Natural killer cell (primary cell): ENCODE measurements at regions of chr10 and their contacts with region 1.

Region 1: GRCh38 chr10:109889867-109890266 is 33.4 kb downstream of the XPNPEP1 start:
- DNase-seq: no peak
- ATAC-seq: no peak
- H3K4me3 ChIP-seq: no peak overlapping the region
- H3K4me3 Mint-ChIP-seq: no peak overlapping the region
- H3K27ac ChIP-seq: no peak overlapping the region
- H3K27ac Mint-ChIP-seq: peak overlapping the region in 1 of 2 donors; percentile 18
- H3K4me1 ChIP-seq: peaks cover 19% of the 10 kb centered on the region
- H3K4me1 Mint-ChIP-seq: peaks cover 37 to 51% of the 10 kb centered on the region in 2 donors
- H3K27me3 ChIP-seq: no peaks in the 10 kb centered on the region
- H3K27me3 Mint-ChIP-seq: no peaks in the 10 kb centered on the region
- CTCF ChIP-seq: no peak

Region 2: DNA sequence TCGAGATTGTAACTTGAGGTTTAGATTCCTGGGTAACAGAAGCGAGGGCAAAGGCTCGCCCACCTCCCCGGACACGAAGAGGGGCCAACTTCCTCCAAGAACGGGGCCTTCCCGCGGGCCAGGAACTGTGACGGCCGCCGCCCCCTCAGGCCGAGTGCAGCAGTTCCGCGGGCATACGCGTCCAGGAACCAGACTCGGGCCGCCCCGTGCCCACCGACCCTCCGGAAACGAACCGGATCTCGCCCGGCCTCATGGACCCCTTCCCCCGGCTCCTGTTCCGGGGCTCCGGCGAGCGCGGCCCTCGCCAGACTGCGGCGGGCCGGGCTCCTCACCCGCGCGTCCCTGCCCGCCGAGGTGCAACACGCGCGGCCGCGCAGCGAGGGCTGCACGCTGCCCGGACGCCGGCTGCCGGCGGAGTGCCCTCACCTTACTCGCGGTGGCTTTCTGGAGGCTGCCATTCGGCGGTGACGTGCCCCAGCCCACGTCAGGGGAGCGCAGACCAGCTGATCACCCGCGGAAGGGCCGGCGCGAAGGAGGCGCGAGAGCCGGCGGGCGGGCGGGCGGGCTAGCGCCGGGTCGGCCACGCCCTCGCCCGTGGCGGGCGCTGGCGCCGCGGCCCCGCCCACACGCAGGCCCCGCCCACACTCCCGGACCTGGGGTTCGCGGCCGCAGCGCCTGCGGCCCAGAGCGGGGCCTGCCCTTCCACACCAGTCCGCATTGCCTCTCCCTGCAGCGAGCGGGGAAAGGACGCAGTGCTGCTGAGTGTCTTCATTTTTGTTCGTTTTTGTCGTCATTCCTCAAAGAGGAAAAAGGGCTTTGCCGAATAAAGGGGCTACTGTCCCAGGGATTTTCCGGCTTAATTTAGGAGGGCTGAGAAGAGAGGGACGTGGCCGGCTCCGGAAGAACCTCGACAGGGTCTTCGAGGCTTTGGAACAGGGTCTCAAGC is 33.4 kb after region 1 on chr10 and contains the start of gene XPNPEP1:
- intact Hi-C with region 1: loop called (anchors 5 kb)
- DNase-seq: peak; percentile 82 to 92
- ATAC-seq: peak; percentile 94 to 99 (median 95)
- H3K4me3 ChIP-seq: peak within 1 kb of the TSS; percentile 89
- H3K4me3 Mint-ChIP-seq: peak within 1 kb of the TSS; percentile 88
- H3K27ac ChIP-seq: peak within 1 kb of the TSS; percentile 91
- H3K27ac Mint-ChIP-seq: peak within 1 kb of the TSS; percentile 80 to 89
- H3K4me1 ChIP-seq: peaks cover 41% of the 10 kb centered on the region
- H3K4me1 Mint-ChIP-seq: peaks cover 55 to 57% of the 10 kb centered on the region in 2 donors
- H3K27me3 ChIP-seq: no peaks in the 10 kb centered on the region
- H3K27me3 Mint-ChIP-seq: no peaks in the 10 kb centered on the region
- CTCF ChIP-seq: no peak
- total RNA-seq, gene XPNPEP1: 102 to 118 (median 106) TPM